ENCODE measurements at regions of chrX and their contacts with region 1.

Region 1: DNA sequence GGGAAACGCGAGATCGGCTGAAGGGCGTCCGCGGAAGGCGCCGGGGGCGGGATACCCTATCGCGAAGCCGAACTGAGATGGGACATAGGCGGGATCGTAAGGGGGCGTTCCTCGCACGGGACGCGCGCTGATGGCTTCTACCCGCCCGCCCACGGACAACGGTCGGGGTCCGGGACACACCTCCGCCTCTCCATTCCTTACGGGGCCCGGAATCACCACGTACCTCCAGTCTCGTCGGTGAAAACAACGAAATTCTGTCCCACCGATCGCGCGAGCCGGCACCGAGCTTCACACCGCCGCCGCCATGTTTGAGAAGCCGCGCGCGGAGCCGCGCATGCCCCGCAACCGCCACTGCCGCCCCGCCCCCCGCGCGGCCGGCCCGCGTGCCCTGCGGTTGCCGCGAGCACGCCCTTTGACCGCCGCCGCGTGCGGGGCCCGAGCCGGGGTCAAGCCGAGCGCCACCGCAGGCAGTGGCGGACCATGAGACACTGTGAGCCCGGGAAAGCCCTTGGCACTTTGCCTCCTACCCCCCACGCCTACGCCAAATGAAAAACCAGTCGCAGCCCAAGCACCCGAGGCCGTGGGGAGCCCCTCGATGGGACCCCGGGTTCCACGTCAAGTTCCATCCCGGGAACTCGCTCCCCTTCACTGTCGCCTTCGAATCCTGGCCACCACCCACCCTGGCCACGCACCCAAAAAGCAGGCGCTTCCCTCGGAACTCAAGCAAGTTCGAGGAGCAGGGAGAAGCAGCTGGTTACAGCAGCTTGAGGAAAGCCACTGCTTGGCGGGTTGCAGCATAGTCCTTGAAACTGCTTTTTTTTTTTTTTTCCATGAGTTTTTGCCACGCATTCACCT is at the start of gene SCML2:
- DNase-seq: peak; percentile 27
- H3K4me3 Mint-ChIP-seq: peak within 1 kb of the TSS; percentile 73
- H3K27ac Mint-ChIP-seq: no peak within 1 kb of the TSS
- H3K4me1 Mint-ChIP-seq: no peaks in the 10 kb centered on the region
- H3K27me3 Mint-ChIP-seq: peaks cover 28% of the 10 kb centered on the region
- total RNA-seq, gene SCML2: 3.0 and 3.6 TPM in 2 replicates

Region 2: GRCh38 chrX:17788439-17788838 is 566.2 kb before region 1 on chrX:
- intact Hi-C with region 1: loop called (anchors 10 kb)
- DNase-seq: no peak
- H3K4me3 Mint-ChIP-seq: no peak overlapping the region
- H3K27ac Mint-ChIP-seq: no peak overlapping the region
- H3K4me1 Mint-ChIP-seq: no peaks in the 10 kb centered on the region
- H3K27me3 Mint-ChIP-seq: no peaks in the 10 kb centered on the region